ENCODE measurements at regions of chr2 and their contacts with region 1.

Region 1: DNA sequence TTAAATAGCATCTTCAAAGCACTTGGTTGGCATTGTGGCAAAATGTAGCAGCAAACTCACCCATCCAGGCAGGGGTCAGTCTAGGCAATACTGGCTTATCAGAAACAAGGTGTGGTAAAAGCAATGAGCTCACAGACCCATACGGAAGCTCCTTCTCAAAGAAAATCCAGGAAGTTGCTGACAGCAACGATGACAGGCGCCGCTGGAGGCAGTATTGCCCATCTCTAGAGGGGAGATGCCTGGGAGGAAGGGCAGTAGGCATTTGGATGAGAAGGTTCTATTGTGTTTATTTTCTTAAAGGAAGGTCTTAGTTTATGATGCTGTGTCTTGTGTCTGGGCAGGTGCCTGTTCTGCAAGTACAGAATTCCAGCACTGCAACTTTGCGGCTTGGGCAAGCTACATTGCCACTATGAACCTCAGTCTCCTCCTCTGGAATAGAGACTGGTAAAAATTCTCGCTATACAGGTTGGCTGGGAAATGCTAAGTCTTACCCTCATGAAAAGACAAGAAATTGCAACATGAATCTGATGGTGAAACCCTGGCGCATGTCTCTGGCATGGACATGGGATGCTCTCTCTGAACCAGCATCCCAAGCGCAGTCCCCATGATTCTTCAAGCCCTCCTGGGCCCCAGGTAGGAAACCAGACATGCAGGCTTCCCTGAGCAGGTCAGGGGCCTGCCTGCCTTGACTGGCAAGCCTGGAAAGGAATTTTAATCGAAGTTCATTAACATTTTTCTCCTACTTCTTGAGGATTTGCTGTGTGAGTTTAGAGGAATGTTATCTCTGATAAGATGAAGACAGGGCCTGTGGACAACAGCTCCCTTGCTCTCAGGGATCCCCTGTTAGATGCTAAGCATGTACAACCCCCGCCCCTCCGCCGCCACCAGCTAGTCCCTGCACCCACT is 156.0 kb downstream of the TFCP2L1 start:
- DNase-seq: peak; percentile 81
- H3K4me3 Mint-ChIP-seq: no peak overlapping the region
- H3K27ac Mint-ChIP-seq: no peak overlapping the region
- H3K4me1 Mint-ChIP-seq: peaks cover 4% of the 10 kb centered on the region
- H3K27me3 Mint-ChIP-seq: peaks cover 22% of the 10 kb centered on the region
- CTCF ChIP-seq: peak; percentile 74

Region 2: DNA sequence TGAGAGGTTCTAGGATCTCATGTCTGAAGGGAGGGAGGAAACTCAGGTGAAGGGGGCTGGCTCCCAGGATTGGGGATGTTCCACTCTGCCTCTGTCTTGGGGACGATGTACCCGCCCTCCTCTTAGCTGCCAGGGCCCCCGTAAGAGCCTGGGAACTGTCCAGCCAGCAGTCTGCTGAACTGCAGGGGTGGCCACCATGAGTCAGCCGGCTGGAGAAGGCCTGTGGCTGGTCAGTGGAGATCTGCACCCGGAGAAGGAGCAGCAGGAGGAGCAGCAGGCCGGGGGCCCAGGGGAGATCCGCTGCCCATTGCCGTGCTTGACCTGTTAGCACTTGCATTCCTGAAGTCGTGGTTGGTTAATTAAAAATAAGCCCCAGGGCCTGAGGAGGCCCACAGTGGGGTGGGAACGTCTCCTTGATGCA is 24.3 kb before region 1 on chr2:
- CTCF ChIA-PET with region 1: interaction called, 10 read pairs
- intact Hi-C with region 1: no loop called
- DNase-seq: no peak
- H3K4me3 Mint-ChIP-seq: no peak overlapping the region
- H3K27ac Mint-ChIP-seq: no peak overlapping the region
- H3K4me1 Mint-ChIP-seq: peaks cover 7% of the 10 kb centered on the region
- H3K27me3 Mint-ChIP-seq: no peaks in the 10 kb centered on the region
- CTCF ChIP-seq: no peak

Region 3: GRCh38 chr2:121210691-121211090 is 81.7 kb after region 1 on chr2:
- CTCF ChIA-PET with region 1: interaction called, 32 read pairs
- intact Hi-C with region 1: no loop called
- DNase-seq: peak; percentile 82
- H3K4me3 Mint-ChIP-seq: peak overlapping the region; percentile 2
- H3K27ac Mint-ChIP-seq: peak overlapping the region; percentile 64
- H3K4me1 Mint-ChIP-seq: peaks cover 47% of the 10 kb centered on the region
- H3K27me3 Mint-ChIP-seq: no peaks in the 10 kb centered on the region
- CTCF ChIP-seq: peak; percentile 35

Region 4: GRCh38 chr2:121293450-121294325 is 164.7 kb after region 1 on chr2:
- CTCF ChIA-PET with region 1: interaction called, 10 read pairs
- intact Hi-C with region 1: loop called (anchors 10 kb)
- DNase-seq: peak; percentile 69
- H3K4me3 Mint-ChIP-seq: no peak overlapping the region
- H3K27ac Mint-ChIP-seq: no peak overlapping the region
- H3K4me1 Mint-ChIP-seq: peaks cover 24% of the 10 kb centered on the region
- H3K27me3 Mint-ChIP-seq: no peaks in the 10 kb centered on the region
- CTCF ChIP-seq: no peak

Region 5: GRCh38 chr2:121356058-121356640 is 227.1 kb after region 1 on chr2:
- CTCF ChIA-PET with region 1: interaction called, 75 read pairs
- intact Hi-C with region 1: no loop called
- DNase-seq: peak; percentile 63
- H3K4me3 Mint-ChIP-seq: no peak overlapping the region
- H3K27ac Mint-ChIP-seq: no peak overlapping the region
- H3K4me1 Mint-ChIP-seq: peaks cover 26% of the 10 kb centered on the region
- H3K27me3 Mint-ChIP-seq: no peaks in the 10 kb centered on the region
- CTCF ChIP-seq: peak; percentile 57